HepG2 (cell line): ENCODE measurements at regions of chr2 and their contacts with region 1.

Region 1: GRCh38 chr2:213098612-213099011 is 52.8 kb downstream of the IKZF2 start:
- DNase-seq: no peak
- ATAC-seq: no peak
- H3K4me3 ChIP-seq: no peak overlapping the region
- H3K27ac ChIP-seq: no peak overlapping the region
- H3K4me1 ChIP-seq: no peaks in the 10 kb centered on the region
- H3K27me3 ChIP-seq: no peaks in the 10 kb centered on the region
- CTCF ChIP-seq: no peak
- EP300 ChIP-seq: no peak
- POLR2A ChIP-seq: no peak
- RAD21 ChIP-seq: no peak

Region 2: GRCh38 chr2:213119061-213119856 is 20.6 kb after region 1 on chr2:
- CTCF ChIA-PET with region 1: no interaction called
- POLR2A ChIA-PET with region 1: no interaction called
- in situ Hi-C with region 1: no loop called
- intact Hi-C with region 1: loop called (anchors 2 kb)
- DNase-seq: no peak
- ATAC-seq: no peak
- H3K4me3 ChIP-seq: no peak overlapping the region
- H3K27ac ChIP-seq: no peak overlapping the region
- H3K4me1 ChIP-seq: no peaks in the 10 kb centered on the region
- H3K27me3 ChIP-seq: no peaks in the 10 kb centered on the region; a peak in 1 of 5 replicates
- CTCF ChIP-seq: no peak
- EP300 ChIP-seq: no peak
- POLR2A ChIP-seq: no peak
- RAD21 ChIP-seq: no peak